ENCODE measurements at regions of chr9 and their contacts with region 1.

Region 1: DNA sequence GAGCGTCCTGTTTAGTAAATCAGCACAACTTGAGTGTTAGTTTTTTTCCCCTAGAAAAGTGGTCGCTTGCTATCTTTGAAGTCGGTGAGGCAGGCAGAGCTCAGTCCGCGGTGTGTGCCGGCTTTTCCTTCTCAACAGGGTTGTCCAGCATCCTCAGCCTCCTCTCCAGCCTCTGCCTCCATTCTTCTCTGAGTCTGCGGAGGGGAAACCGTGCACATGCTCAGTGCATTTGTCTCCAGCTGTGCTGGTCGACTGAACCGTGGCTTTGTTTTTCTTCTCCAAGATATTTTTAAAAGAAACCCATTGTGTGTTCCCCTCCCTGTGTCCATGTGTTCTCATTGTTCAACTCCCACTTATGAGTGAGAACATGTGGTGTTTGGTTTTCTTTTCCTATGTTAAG is 25.3 kb downstream of the FAM240B start:
- DNase-seq: no peak
- ATAC-seq: no peak
- H3K4me3 ChIP-seq: no peak overlapping the region
- H3K27ac ChIP-seq: no peak overlapping the region
- H3K4me1 ChIP-seq: no peaks in the 10 kb centered on the region
- H3K27me3 ChIP-seq: no peaks in the 10 kb centered on the region
- CTCF ChIP-seq: no peak
- POLR2A ChIP-seq: no peak

Region 2: DNA sequence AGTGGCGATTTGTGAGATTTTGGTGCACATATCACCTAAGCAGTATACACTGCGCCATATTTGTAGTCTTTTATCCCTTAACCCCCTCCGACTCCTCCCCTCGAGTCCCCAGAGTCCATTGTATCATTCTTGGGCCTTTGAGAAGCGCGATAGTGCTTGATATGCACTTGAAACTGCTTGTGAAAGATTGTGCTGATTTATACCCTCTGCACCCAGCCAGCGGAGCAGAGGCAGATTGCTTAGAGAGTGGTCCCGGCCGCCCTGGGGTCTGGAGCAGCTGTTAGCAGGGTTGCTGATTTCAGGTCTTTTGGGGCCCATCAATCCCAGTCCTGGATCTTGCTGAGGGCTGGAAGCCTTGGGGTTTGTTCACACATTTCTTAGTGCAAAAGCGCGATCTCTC is 38.2 kb after region 1 on chr9:
- intact Hi-C with region 1: loop called in 2 of 10 experiments (anchors 5 to 10 kb)
- DNase-seq: no peak
- ATAC-seq: no peak
- H3K4me3 ChIP-seq: no peak overlapping the region
- H3K27ac ChIP-seq: no peak overlapping the region
- H3K4me1 ChIP-seq: no peaks in the 10 kb centered on the region
- H3K27me3 ChIP-seq: no peaks in the 10 kb centered on the region
- CTCF ChIP-seq: no peak
- POLR2A ChIP-seq: no peak

Region 3: GRCh38 chr9:38761334-38761733 is 66.7 kb after region 1 on chr9:
- intact Hi-C with region 1: loop called in 2 of 10 experiments (anchors 5 to 10 kb)
- DNase-seq: no peak
- ATAC-seq: no peak
- H3K4me3 ChIP-seq: no peak overlapping the region
- H3K27ac ChIP-seq: no peak overlapping the region
- H3K4me1 ChIP-seq: no peaks in the 10 kb centered on the region
- H3K27me3 ChIP-seq: no peaks in the 10 kb centered on the region
- CTCF ChIP-seq: no peak
- POLR2A ChIP-seq: no peak

Measured in heart left ventricle (tissue), 16 donors.